Esophagus muscularis mucosa (tissue), 4 donors: ENCODE measurements at regions of chr2 and their contacts with region 1.

Region 1: GRCh38 chr2:22136446-22136845 is 1012.7 kb downstream of the TDRD15 start:
- DNase-seq: no peak
- H3K4me3 ChIP-seq: no peak overlapping the region
- H3K27ac ChIP-seq: no peak overlapping the region
- H3K4me1 ChIP-seq: no peaks in the 10 kb centered on the region
- H3K27me3 ChIP-seq: no peaks in the 10 kb centered on the region
- CTCF ChIP-seq: no peak
- EP300 ChIP-seq: no peak
- POLR2A ChIP-seq: no peak

Region 2: GRCh38 chr2:22037274-22037673 is 99.2 kb before region 1 on chr2:
- intact Hi-C with region 1: no loop called
- DNase-seq: no peak
- H3K4me3 ChIP-seq: no peak overlapping the region
- H3K27ac ChIP-seq: no peak overlapping the region
- H3K4me1 ChIP-seq: peaks cover 0 to 12% (median 8%) of the 10 kb centered on the region in 4 donors
- H3K27me3 ChIP-seq: no peaks in the 10 kb centered on the region
- CTCF ChIP-seq: no peak
- EP300 ChIP-seq: no peak
- POLR2A ChIP-seq: no peak

Region 3: DNA sequence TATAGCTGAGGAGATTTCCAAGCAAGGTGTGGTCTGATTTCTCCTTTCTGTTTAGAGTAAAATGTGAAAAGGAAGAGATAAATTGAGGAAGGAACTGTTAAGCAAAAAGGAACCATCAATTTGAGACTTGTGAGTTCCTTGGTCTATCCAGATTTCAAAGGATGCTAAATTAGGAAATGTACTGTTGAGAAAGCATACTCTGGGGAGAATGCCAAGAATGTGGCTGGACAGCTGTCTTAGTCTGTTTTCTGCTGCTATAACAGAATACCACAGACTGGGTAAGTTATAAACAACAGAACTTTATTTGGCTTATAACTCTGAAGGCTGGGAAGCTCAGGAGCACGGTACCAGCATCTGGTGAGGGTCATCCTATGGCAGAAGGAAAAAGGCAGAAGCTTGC is 84.6 kb after region 1 on chr2:
- intact Hi-C with region 1: loop called (anchors 5 kb)
- DNase-seq: no peak
- H3K4me3 ChIP-seq: no peak overlapping the region
- H3K27ac ChIP-seq: no peak overlapping the region
- H3K4me1 ChIP-seq: no peaks in the 10 kb centered on the region
- H3K27me3 ChIP-seq: no peaks in the 10 kb centered on the region
- CTCF ChIP-seq: no peak
- EP300 ChIP-seq: no peak
- POLR2A ChIP-seq: no peak

Region 4: GRCh38 chr2:22238967-22239366 is 102.5 kb after region 1 on chr2:
- intact Hi-C with region 1: no loop called
- DNase-seq: no peak
- H3K4me3 ChIP-seq: no peak overlapping the region
- H3K27ac ChIP-seq: no peak overlapping the region
- H3K4me1 ChIP-seq: no peaks in the 10 kb centered on the region
- H3K27me3 ChIP-seq: no peaks in the 10 kb centered on the region
- CTCF ChIP-seq: no peak
- EP300 ChIP-seq: no peak
- POLR2A ChIP-seq: no peak